Heart right ventricle (tissue), 16 donors: ENCODE measurements at regions of chr13 and their contacts with region 1.

Region 1: DNA sequence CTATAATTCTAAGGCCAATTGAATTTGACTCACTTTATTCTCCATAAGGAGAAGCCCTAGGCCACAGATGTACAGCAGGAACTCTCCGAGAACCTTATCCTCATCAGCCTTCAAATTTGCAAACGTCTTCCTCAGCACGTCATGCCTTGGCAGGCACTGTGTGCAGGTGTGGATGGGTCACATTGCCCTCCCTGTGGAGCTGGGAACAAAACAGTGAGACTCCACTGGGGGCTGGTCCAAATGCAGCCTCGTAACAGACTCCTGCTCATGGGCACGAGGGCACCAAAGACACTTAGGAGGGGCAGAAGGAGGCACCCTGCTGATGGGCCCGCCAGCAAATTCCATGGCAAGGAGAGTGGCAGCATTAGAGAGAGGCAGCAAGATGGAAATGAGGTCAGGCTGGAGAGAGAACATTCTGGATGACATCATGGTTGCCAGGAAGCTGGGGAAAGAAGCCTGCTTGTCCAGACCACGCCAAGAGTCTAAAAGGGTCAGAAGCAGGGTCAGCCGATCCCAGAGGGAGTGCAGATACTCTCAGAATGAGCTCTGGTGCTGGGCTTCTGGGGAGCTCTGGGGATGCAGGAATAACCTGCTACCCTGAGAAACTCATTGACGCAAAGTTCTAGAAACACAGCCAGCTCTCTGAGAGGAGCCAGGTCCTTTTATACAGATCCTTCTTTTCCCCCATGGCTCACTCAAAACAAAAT is 242.2 kb downstream of the B3GLCT start:
- DNase-seq: peak; percentile 69 to 84
- ATAC-seq: peak; percentile 79 to 92 (median 89)
- H3K4me3 ChIP-seq: no peak overlapping the region
- H3K27ac ChIP-seq: peak overlapping the region in 6 of 10 donors; percentile 11 to 61 (median 32)
- H3K4me1 ChIP-seq: peaks cover 0 to 19% (median 4%) of the 10 kb centered on the region in 9 donors
- H3K27me3 ChIP-seq: peaks cover 0 to 9% (median 4%) of the 10 kb centered on the region in 7 donors
- CTCF ChIP-seq: no peak

Region 2: GRCh38 chr13:29532116-29532515 is 1909.8 kb before region 1 on chr13:
- intact Hi-C with region 1: no loop called
- DNase-seq: no peak
- ATAC-seq: peak in 2 of 8 donors; percentile 34 to 37
- H3K4me3 ChIP-seq: no peak overlapping the region
- H3K27ac ChIP-seq: no peak overlapping the region
- H3K4me1 ChIP-seq: peaks cover 0 to 4% (median 0%) of the 10 kb centered on the region in 9 donors
- H3K27me3 ChIP-seq: no peaks in the 10 kb centered on the region
- CTCF ChIP-seq: no peak

Region 3: DNA sequence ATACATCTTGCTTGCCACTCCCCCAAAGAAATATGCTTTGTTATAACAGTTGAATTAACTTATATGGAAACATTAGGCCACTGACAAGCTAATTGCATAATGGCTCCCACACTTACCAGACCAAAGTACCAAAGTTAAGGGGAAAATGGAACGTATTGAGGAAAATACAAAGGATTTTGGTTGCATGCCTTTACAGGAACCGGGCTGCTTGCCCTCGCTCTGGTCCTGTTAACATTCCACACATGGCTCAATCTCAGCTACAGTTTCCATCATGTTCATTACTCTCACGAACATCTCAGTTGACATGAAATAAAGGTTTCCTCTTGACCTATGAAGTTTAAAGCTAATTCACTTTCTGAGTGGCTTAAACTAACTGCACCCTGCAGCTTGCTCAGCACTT is 76.7 kb after region 1 on chr13:
- intact Hi-C with region 1: loop called in 1 of 10 experiments (anchors 10 kb)
- DNase-seq: no peak
- ATAC-seq: no peak
- H3K4me3 ChIP-seq: no peak overlapping the region
- H3K27ac ChIP-seq: no peak overlapping the region
- H3K4me1 ChIP-seq: peaks cover 0 to 6% (median 0%) of the 10 kb centered on the region in 9 donors
- H3K27me3 ChIP-seq: peaks cover 0 to 5% (median 0%) of the 10 kb centered on the region in 7 donors
- CTCF ChIP-seq: no peak

Region 4: GRCh38 chr13:31797154-31797775 is 355.3 kb after region 1 on chr13:
- intact Hi-C with region 1: loop called in 2 of 10 experiments (anchors 5 to 10 kb)
- DNase-seq: no peak
- ATAC-seq: peak in 2 of 8 donors; percentile 35 to 39
- H3K4me3 ChIP-seq: no peak overlapping the region
- H3K27ac ChIP-seq: no peak overlapping the region
- H3K4me1 ChIP-seq: peaks cover 0 to 8% (median 0%) of the 10 kb centered on the region in 9 donors
- H3K27me3 ChIP-seq: no peaks in the 10 kb centered on the region
- CTCF ChIP-seq: peak in 7 of 9 donors; percentile 17 to 59 (median 49)